A673 (cell line): ENCODE measurements at regions of chr11 and their contacts with region 1.

Region 1: GRCh38 chr11:99176430-99176829 is 155.7 kb downstream of the CNTN5 start:
- DNase-seq: no peak
- H3K4me3 ChIP-seq: no peak overlapping the region
- H3K27ac ChIP-seq: no peak overlapping the region
- H3K4me1 ChIP-seq: no peaks in the 10 kb centered on the region
- H3K27me3 ChIP-seq: no peaks in the 10 kb centered on the region
- CTCF ChIP-seq: no peak

Region 2: GRCh38 chr11:99188221-99188620 is 11.8 kb after region 1 on chr11:
- CTCF ChIA-PET with region 1: no interaction called
- POLR2A ChIA-PET with region 1: interaction called, 10 read pairs
- intact Hi-C with region 1: no loop called
- DNase-seq: no peak
- H3K4me3 ChIP-seq: no peak overlapping the region
- H3K27ac ChIP-seq: no peak overlapping the region
- H3K4me1 ChIP-seq: no peaks in the 10 kb centered on the region
- H3K27me3 ChIP-seq: no peaks in the 10 kb centered on the region
- CTCF ChIP-seq: no peak

Region 3: DNA sequence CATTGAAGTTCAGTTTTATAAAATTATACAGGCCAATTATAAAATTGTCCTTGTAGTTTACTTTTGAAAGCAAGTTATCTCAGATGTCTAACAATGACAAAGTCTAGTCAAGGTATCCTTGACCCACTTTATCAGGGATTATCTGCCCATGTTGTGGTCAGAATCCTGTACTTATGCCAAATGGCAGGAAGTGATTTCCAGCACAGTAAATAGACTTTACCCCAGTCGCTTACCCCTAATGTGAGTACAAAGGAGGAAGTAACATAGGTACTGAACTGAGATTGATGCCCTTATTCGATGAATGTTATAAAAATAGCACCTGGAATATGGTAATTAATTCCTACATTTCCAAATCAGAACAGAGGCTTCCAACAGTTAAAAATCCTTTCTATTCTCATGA is 200.0 kb after region 1 on chr11:
- CTCF ChIA-PET with region 1: no interaction called
- POLR2A ChIA-PET with region 1: no interaction called
- intact Hi-C with region 1: no loop called
- DNase-seq: peak; percentile 7
- H3K4me3 ChIP-seq: no peak overlapping the region
- H3K27ac ChIP-seq: no peak overlapping the region
- H3K4me1 ChIP-seq: peaks cover 16% of the 10 kb centered on the region
- H3K27me3 ChIP-seq: no peaks in the 10 kb centered on the region
- CTCF ChIP-seq: no peak

Region 4: GRCh38 chr11:99464985-99465384 is 288.6 kb after region 1 on chr11:
- CTCF ChIA-PET with region 1: no interaction called
- POLR2A ChIA-PET with region 1: interaction called, 10 read pairs
- intact Hi-C with region 1: no loop called
- DNase-seq: no peak
- H3K4me3 ChIP-seq: no peak overlapping the region
- H3K27ac ChIP-seq: no peak overlapping the region
- H3K4me1 ChIP-seq: no peaks in the 10 kb centered on the region
- H3K27me3 ChIP-seq: no peaks in the 10 kb centered on the region
- CTCF ChIP-seq: no peak